ENCODE measurements at regions of chr11 and their contacts with region 1.

Region 1: GRCh38 chr11:77411717-77412441 is 62.0 kb downstream of the PAK1 start:
- DNase-seq: peak; percentile 88
- ATAC-seq: peak; percentile 96
- H3K4me3 ChIP-seq: peak overlapping the region; percentile 50 to 83 (median 78)
- H3K4me3 Mint-ChIP-seq: peak overlapping the region; percentile 95
- H3K27ac ChIP-seq: peak overlapping the region; percentile 32 to 68
- H3K27ac Mint-ChIP-seq: peak overlapping the region; percentile 85
- H3K4me1 ChIP-seq: peaks cover 14 to 28% of the 10 kb centered on the region in 2 donors
- H3K4me1 Mint-ChIP-seq: peaks cover 28% of the 10 kb centered on the region
- H3K27me3 ChIP-seq: no peaks in the 10 kb centered on the region
- H3K27me3 Mint-ChIP-seq: no peaks in the 10 kb centered on the region
- CTCF ChIP-seq: no peak

Region 2: DNA sequence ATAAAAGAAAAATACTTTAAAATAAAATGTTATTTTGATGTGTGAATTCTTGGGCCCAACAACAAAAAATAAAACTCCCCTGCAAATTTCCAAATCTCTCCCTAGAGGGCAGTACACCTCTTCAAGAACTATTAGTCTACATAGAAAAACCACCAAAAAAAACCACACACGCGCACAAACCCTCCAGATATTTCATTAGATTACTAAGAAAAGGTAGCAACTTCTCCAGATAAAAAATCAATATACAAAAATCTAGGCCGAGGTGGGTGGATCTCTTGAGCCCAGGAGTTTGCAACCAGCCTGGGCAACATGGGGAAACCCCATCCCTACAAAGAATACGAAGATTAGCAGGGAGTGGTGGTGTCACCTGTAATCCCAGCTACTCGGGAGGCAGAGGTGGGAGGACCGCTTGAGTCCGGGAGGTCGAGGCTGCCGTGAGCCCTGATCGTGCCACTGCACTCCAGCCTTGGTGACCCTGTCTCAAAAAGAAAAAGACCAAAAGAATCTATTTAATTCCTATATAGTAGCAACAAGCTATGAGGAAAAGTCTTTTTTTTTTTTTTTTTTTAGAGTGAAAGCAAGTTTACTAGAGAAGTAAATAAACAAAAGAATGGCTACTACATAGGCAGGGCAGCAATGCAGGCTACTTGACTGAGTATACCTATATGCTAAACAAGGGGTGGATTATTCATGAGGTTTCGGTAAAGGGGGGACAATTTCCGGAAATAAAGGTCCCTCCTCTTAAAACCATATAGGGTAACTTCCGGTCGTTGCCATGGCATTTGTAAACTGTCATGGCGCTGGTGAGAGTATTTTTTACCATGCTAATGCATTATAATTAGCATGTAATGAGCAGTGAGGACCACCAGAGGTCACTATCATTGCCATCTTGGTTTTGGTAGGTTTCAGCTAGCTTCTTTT is 364.6 kb before region 1 on chr11:
- CTCF ChIA-PET with region 1: no interaction called
- POLR2A ChIA-PET with region 1: no interaction called
- intact Hi-C with region 1: loop called (anchors 5 kb)
- DNase-seq: peak; percentile 95
- ATAC-seq: peak; percentile 86
- H3K4me3 ChIP-seq: peak overlapping the region in 4 of 5 experiments; percentile 20 to 70 (median 46)
- H3K4me3 Mint-ChIP-seq: peak overlapping the region; percentile 67
- H3K27ac ChIP-seq: no peak overlapping the region
- H3K27ac Mint-ChIP-seq: peak overlapping the region; percentile 53
- H3K4me1 ChIP-seq: peaks cover 14 to 15% of the 10 kb centered on the region in 2 donors
- H3K4me1 Mint-ChIP-seq: peaks cover 13% of the 10 kb centered on the region
- H3K27me3 ChIP-seq: peaks cover 0 to 29% (median 17%) of the 10 kb centered on the region in 4 experiments
- H3K27me3 Mint-ChIP-seq: peaks cover 35% of the 10 kb centered on the region
- CTCF ChIP-seq: peak; percentile 67

Region 3: GRCh38 chr11:77267962-77268361 is 143.9 kb before region 1 on chr11:
- CTCF ChIA-PET with region 1: no interaction called
- POLR2A ChIA-PET with region 1: no interaction called
- intact Hi-C with region 1: no loop called
- DNase-seq: no peak
- ATAC-seq: no peak
- H3K4me3 ChIP-seq: no peak overlapping the region
- H3K4me3 Mint-ChIP-seq: no peak overlapping the region
- H3K27ac ChIP-seq: no peak overlapping the region
- H3K27ac Mint-ChIP-seq: no peak overlapping the region
- H3K4me1 ChIP-seq: no peaks in the 10 kb centered on the region
- H3K4me1 Mint-ChIP-seq: no peaks in the 10 kb centered on the region
- H3K27me3 ChIP-seq: no peaks in the 10 kb centered on the region
- H3K27me3 Mint-ChIP-seq: peaks cover 22% of the 10 kb centered on the region
- CTCF ChIP-seq: no peak

Region 4: DNA sequence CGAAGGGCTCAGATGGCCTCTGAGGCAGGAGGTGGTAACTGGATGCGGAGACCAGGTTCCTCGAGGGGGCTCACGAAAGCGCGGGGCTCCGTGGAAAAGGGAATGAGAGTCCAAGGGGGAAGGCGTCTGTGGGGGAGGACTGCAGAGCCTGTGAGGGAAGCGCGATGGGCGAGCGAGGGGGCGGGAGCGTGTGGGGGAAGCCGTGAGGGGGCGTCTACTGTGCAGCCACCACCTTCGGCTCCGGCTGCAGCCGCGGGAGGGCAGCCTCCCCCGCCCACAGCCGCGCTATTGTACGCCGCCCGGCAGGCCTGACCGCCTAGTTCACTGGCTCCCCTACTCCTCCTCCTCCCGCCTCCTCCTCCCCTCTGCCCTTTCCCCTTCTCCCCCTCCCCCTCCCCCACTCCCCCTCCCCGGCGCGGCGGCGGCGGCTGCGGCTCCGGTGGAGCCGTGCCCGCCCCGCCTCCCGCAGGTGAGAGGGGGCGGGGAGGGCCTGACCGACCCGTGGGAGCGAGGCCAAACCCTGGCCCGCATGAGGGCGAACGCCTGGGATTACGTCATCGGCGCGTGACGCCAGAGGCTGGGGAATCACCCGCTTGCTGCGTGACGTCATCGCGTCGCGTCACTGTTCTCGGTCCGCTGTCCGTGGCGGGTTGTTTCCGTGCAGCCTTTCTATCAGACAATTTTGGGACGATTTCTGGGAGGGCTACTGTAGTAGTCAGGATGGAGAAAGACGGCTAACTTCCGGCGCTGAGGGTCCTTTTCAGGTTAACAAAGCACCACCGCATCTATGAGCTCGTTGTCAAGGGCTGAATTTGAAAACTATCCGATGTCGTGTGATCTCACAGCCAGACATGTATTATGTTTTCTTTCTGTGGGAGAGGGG is 62.2 kb after region 1 on chr11 and contains the start of gene PAK1:
- CTCF ChIA-PET with region 1: interaction called, 5 read pairs
- POLR2A ChIA-PET with region 1: no interaction called
- intact Hi-C with region 1: loop called (anchors 1 kb)
- DNase-seq: peak; percentile 99
- ATAC-seq: peak; percentile 79
- H3K4me3 ChIP-seq: peak within 1 kb of the TSS; percentile 31 to 74 (median 64)
- H3K4me3 Mint-ChIP-seq: peak within 1 kb of the TSS; percentile 90
- H3K27ac ChIP-seq: peak within 1 kb of the TSS; percentile 61 to 64
- H3K27ac Mint-ChIP-seq: peak within 1 kb of the TSS; percentile 86
- H3K4me1 ChIP-seq: peaks cover 13% of the 10 kb centered on the region in 2 donors
- H3K4me1 Mint-ChIP-seq: peaks cover 17% of the 10 kb centered on the region
- H3K27me3 ChIP-seq: peaks cover 0 to 4% (median 2%) of the 10 kb centered on the region in 4 experiments
- H3K27me3 Mint-ChIP-seq: peaks cover 6% of the 10 kb centered on the region
- CTCF ChIP-seq: peak; percentile 40
- total RNA-seq, gene PAK1: 18.6 and 23.4 TPM in 2 replicates

Region 5: DNA sequence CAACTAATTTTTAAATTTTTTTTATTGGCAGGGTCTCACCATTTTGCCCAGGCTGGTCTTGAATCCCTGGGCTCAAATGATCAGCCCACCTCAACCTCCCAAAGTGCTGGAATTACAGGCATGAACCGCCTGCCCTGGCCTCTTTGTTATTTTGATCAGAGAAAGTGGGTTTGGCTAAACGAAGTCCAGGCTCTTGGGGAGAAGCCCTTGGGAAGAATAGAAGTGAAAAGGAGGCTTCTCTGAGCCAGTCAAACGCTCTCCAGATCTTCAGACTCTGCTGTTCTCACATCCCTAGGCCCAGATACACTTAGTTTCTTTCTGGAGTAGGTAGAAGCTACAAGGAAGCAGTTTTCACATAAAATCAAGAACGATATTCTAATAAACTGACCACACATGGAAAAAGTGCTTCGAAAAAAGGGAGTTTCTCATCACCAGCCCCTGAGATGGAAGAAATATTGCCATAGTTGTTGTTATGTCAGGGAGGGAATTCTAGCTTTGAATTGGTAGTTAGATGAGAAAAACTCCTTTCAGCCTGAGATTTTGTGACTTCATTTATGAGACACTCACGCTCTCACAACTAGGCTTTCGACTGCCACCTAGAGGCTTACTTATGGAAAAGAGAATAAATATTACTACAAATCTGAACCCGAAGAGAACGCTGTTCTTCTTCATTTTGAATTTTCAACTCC is 136.1 kb after region 1 on chr11:
- CTCF ChIA-PET with region 1: no interaction called
- POLR2A ChIA-PET with region 1: no interaction called
- intact Hi-C with region 1: loop called (anchors 5 kb)
- DNase-seq: peak; percentile 69
- ATAC-seq: peak; percentile 28
- H3K4me3 ChIP-seq: no peak overlapping the region
- H3K4me3 Mint-ChIP-seq: no peak overlapping the region
- H3K27ac ChIP-seq: no peak overlapping the region
- H3K27ac Mint-ChIP-seq: no peak overlapping the region
- H3K4me1 ChIP-seq: no peaks in the 10 kb centered on the region
- H3K4me1 Mint-ChIP-seq: peaks cover 4% of the 10 kb centered on the region
- H3K27me3 ChIP-seq: no peaks in the 10 kb centered on the region
- H3K27me3 Mint-ChIP-seq: no peaks in the 10 kb centered on the region
- CTCF ChIP-seq: peak; percentile 84

Measured in B cell (primary cell).